Right ventricle myocardium inferior (tissue), 1 donor: ENCODE measurements at regions of chr5 and their contacts with region 1.

Region 1: GRCh38 chr5:128920345-128921215 is 44.7 kb upstream of the SLC27A6 start:
- DNase-seq: no peak
- ATAC-seq: peak; percentile 93

Region 2: DNA sequence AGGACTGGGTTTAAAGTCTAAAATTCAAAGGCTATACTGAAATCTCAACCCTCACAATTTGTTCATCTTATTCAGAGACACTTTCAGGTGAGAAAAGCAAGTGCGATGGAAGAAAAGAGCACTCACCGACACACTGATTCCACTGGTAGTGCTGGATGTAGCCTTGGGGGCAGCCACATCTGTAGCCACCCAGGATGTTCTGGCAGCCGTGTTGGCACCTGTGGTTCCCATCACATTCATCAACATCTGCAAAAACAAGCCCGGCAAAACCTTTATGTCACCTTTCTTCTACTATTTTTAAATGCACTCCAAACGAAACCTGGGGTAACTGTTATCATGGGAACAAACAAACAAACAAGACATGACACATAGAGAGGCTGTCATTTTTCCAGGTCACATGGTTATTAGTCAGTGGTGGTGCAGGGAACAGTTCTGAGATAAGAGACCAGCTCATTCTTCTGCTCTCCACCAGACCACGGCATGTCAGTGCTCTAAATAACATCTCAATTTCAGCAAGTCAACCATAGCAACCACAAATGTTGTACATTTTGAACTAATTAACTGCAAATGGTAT is 648.6 kb before region 1 on chr5:
- intact Hi-C with region 1: loop called (anchors 10 kb)
- DNase-seq: no peak
- ATAC-seq: peak; percentile 94

Region 3: GRCh38 chr5:129094087-129094923 is 173.7 kb after region 1 on chr5 and contains the start of gene ISOC1:
- intact Hi-C with region 1: loop called (anchors 2 kb)
- DNase-seq: peak; percentile 96
- ATAC-seq: peak; percentile 98
- total RNA-seq, gene ISOC1: 120 TPM